ENCODE measurements at regions of chr5 and their contacts with region 1.

Region 1: DNA sequence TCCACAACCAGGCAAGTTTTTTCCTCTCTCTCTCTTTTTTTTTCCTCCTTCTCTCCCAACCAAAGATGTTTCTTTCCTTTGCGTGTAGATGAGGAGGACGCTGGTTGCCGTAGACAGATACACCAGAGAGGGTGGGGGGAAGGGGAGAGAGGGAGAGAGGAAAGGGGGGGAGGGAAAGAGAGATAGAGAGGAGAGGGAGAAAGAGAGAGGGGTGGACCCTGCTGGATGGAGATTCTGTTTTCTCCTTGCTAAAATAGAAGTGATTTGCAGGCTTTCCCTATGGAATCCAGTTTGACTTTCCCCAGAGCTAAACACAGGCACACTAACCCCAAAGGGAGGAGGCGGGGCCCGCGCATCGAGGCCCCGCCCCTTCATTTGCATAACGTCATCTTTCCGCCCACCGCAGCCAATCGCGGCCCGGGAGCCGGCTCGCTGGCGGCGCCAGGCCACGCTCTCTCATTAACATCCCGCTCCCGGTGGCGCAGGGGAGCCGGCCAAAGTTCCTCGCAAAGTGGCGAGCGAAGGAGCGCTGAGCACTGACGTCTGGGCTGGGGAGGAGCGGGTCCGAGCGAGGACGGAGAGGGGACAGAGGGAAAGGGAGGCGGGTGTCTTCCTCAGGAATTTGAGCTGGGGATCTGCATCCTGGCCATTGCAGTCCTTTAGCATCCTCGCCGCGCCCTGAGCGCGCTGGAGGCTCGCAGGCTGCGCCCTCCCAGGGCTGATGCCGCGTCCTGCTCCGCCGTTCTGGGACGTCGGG is 487 bp upstream of the EBF1 start:
- DNase-seq: peak; percentile 94 to 97 (median 97)
- ATAC-seq: peak; percentile 90 to 93
- H3K4me3 ChIP-seq: peak overlapping the region; percentile 69
- H3K27ac ChIP-seq: peak overlapping the region; percentile 89
- H3K4me1 ChIP-seq: no peaks in the 10 kb centered on the region
- H3K27me3 ChIP-seq: no peaks in the 10 kb centered on the region

Region 2: GRCh38 chr5:158174918-158175851 is 925.0 kb before region 1 on chr5:
- intact Hi-C with region 1: loop called in 3 of 4 experiments (anchors 5 kb)
- DNase-seq: peak; percentile 69 to 88 (median 81)
- ATAC-seq: peak; percentile 87 to 92
- H3K4me3 ChIP-seq: no peak overlapping the region
- H3K27ac ChIP-seq: peak overlapping the region; percentile 59
- H3K4me1 ChIP-seq: peaks cover 3% of the 10 kb centered on the region
- H3K27me3 ChIP-seq: no peaks in the 10 kb centered on the region

Region 3: DNA sequence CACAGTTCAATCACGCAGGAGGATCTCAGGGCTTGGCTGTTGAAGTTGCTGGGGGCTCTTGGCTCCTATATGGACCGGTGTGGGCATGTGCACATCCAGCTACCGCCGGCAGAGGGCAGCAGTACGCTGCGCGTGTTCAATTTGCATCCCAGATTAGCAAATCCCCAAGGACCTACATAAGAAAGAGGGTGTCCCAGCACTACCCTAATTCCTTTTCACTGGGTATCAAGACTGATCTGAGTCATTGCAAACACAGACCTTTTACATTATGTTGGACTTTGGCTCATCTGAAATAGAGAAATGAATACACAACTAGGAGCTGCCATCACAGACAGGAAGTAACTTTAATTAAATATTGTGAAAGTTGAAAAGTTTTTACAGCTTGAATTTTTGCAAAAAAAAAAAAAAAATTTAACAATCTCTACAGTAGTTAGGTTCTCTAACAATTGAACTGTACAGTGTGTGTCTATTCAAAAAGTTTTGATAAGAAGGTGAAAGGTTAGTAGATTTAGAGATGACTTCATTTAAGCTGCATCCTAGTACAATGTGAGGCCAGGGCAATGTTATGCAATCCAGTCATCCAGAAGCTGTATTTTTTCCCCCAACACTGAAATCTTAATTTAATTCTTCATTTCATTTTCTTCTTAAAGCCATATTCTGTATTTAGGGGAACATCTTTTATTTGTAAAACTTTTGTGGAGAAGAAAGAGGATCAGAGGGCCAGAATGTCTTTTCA is 404.4 kb before region 1 on chr5:
- intact Hi-C with region 1: loop called in 2 of 4 experiments (anchors 5 kb)
- DNase-seq: peak; percentile 73 to 90 (median 86)
- ATAC-seq: peak; percentile 66 to 86
- H3K4me3 ChIP-seq: no peak overlapping the region
- H3K27ac ChIP-seq: no peak overlapping the region
- H3K4me1 ChIP-seq: peaks cover 2% of the 10 kb centered on the region
- H3K27me3 ChIP-seq: no peaks in the 10 kb centered on the region

Region 4: GRCh38 chr5:158852622-158853021 is 247.6 kb before region 1 on chr5:
- intact Hi-C with region 1: no loop called
- DNase-seq: no peak
- ATAC-seq: no peak
- H3K4me3 ChIP-seq: no peak overlapping the region
- H3K27ac ChIP-seq: no peak overlapping the region
- H3K4me1 ChIP-seq: no peaks in the 10 kb centered on the region
- H3K27me3 ChIP-seq: no peaks in the 10 kb centered on the region

Region 5: DNA sequence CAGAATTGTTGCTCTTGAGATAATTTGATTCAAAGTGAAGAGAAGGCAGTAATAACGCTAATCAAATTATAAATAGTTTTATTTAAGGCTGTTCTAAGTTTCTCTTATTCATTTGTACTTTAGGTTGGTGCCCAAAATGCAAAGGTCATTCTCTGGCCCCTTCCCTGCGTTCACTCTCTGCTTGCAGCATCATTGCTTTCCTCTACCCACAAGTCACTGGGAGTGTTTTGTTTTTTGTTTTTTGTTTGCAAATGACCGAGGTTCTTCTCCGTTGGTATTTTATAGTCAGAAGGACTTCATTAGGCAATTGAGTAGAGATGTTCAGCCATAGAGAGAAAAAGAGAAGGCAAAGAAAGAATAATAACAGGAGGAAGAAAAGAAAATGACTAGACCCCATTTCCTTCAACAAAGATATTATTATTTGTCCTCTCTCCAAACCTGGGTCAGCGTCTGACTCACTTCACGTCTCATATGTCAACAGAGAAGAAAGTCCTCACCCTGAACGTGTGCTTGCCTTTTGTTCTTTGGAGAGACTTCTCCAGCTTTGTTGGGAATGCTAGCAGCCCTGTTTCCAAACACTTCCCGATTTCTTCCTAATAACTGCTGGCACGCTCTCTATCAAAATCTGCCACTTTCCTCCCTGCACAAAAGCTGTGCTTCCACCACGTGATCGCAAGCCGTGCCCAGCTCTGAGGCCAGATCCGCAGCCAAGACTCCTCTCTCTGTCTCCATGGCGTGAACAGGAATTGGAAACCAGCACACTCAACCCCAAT is 120.3 kb before region 1 on chr5:
- intact Hi-C with region 1: loop called in 1 of 4 experiments (anchors 10 kb)
- DNase-seq: peak; percentile 65 to 91 (median 89)
- ATAC-seq: peak; percentile 86 to 95
- H3K4me3 ChIP-seq: peak overlapping the region; percentile 29
- H3K27ac ChIP-seq: peak overlapping the region; percentile 25
- H3K4me1 ChIP-seq: no peaks in the 10 kb centered on the region
- H3K27me3 ChIP-seq: no peaks in the 10 kb centered on the region

Region 6: GRCh38 chr5:159034083-159034824 is 65.9 kb before region 1 on chr5:
- intact Hi-C with region 1: no loop called
- DNase-seq: peak in 1 of 3 donors; percentile 33
- ATAC-seq: peak in 1 of 2 donors; percentile 83
- H3K4me3 ChIP-seq: peak overlapping the region; percentile 22
- H3K27ac ChIP-seq: peak overlapping the region; percentile 43
- H3K4me1 ChIP-seq: peaks cover 6% of the 10 kb centered on the region
- H3K27me3 ChIP-seq: no peaks in the 10 kb centered on the region

Region 7: GRCh38 chr5:159049844-159050315 is 50.3 kb before region 1 on chr5:
- intact Hi-C with region 1: loop called in 2 of 4 experiments (anchors 5 kb)
- DNase-seq: no peak
- ATAC-seq: peak; percentile 63 to 72
- H3K4me3 ChIP-seq: no peak overlapping the region
- H3K27ac ChIP-seq: peak overlapping the region; percentile 91
- H3K4me1 ChIP-seq: peaks cover 10% of the 10 kb centered on the region
- H3K27me3 ChIP-seq: no peaks in the 10 kb centered on the region

Region 8: GRCh38 chr5:159061179-159061796 is 38.9 kb before region 1 on chr5:
- intact Hi-C with region 1: loop called in 2 of 4 experiments (anchors 5 kb)
- DNase-seq: peak; percentile 79 to 82 (median 80)
- ATAC-seq: peak; percentile 87 to 96
- H3K4me3 ChIP-seq: peak overlapping the region; percentile 42
- H3K27ac ChIP-seq: peak overlapping the region; percentile 81
- H3K4me1 ChIP-seq: peaks cover 3% of the 10 kb centered on the region
- H3K27me3 ChIP-seq: no peaks in the 10 kb centered on the region

Region 9: GRCh38 chr5:159149085-159149484 is 48.9 kb after region 1 on chr5:
- intact Hi-C with region 1: no loop called
- DNase-seq: no peak
- ATAC-seq: no peak
- H3K4me3 ChIP-seq: no peak overlapping the region
- H3K27ac ChIP-seq: no peak overlapping the region
- H3K4me1 ChIP-seq: no peaks in the 10 kb centered on the region
- H3K27me3 ChIP-seq: no peaks in the 10 kb centered on the region

Measured in right cardiac atrium (tissue), 5 donors.